ENCODE measurements at regions of chr18 and their contacts with region 1.

Region 1: GRCh38 chr18:49858309-49859020 is 45.1 kb upstream of the ACAA2 start:
- DNase-seq: peak; percentile 73
- H3K4me3 Mint-ChIP-seq: no peak overlapping the region
- H3K27ac Mint-ChIP-seq: no peak overlapping the region
- H3K4me1 Mint-ChIP-seq: no peaks in the 10 kb centered on the region
- H3K27me3 Mint-ChIP-seq: no peaks in the 10 kb centered on the region

Region 2: GRCh38 chr18:49464718-49465598 is 393.5 kb before region 1 on chr18:
- CTCF ChIA-PET with region 1: interaction called, 8 read pairs
- intact Hi-C with region 1: loop called (anchors 1 kb)
- DNase-seq: no peak
- H3K4me3 Mint-ChIP-seq: no peak overlapping the region
- H3K27ac Mint-ChIP-seq: no peak overlapping the region
- H3K4me1 Mint-ChIP-seq: peaks cover 9% of the 10 kb centered on the region
- H3K27me3 Mint-ChIP-seq: no peaks in the 10 kb centered on the region

Region 3: GRCh38 chr18:49728542-49728941 is 129.9 kb before region 1 on chr18:
- CTCF ChIA-PET with region 1: interaction called, 9 read pairs
- intact Hi-C with region 1: loop called (anchors 1 kb)
- DNase-seq: peak; percentile 69
- H3K4me3 Mint-ChIP-seq: no peak overlapping the region
- H3K27ac Mint-ChIP-seq: no peak overlapping the region
- H3K4me1 Mint-ChIP-seq: peaks cover 4% of the 10 kb centered on the region
- H3K27me3 Mint-ChIP-seq: no peaks in the 10 kb centered on the region